Caco-2 (cell line): ENCODE measurements at regions of chr2 and their contacts with region 1.

Region 1: GRCh38 chr2:164841719-164842623 is at the start of gene COBLL1:
- DNase-seq: peak; percentile 94 to 95
- H3K4me3 ChIP-seq: peak within 1 kb of the TSS; percentile 86
- H3K4me3 Mint-ChIP-seq: peak within 1 kb of the TSS; percentile 95
- H3K27ac Mint-ChIP-seq: peak within 1 kb of the TSS; percentile 92
- H3K4me1 ChIP-seq: peaks cover 27% of the 10 kb centered on the region
- H3K4me1 Mint-ChIP-seq: peaks cover 14% of the 10 kb centered on the region
- H3K27me3 ChIP-seq: no peaks in the 10 kb centered on the region
- H3K27me3 Mint-ChIP-seq: no peaks in the 10 kb centered on the region
- CTCF ChIP-seq: peak; percentile 87 to 89
- total RNA-seq, gene COBLL1: 42.1 and 47.9 TPM in 2 replicates

Region 2: GRCh38 chr2:164710837-164711765 is 130.9 kb before region 1 on chr2:
- CTCF ChIA-PET with region 1: interaction called, 6 read pairs
- POLR2A ChIA-PET with region 1: no interaction called
- intact Hi-C with region 1: loop called (anchors 1 kb)
- DNase-seq: peak; percentile 46 to 56
- H3K4me3 ChIP-seq: 0 out of 2 replicates have a peak overlapping the region, but pooled peaks have one; percentile 3
- H3K4me3 Mint-ChIP-seq: peak overlapping the region; percentile 59
- H3K27ac Mint-ChIP-seq: peak overlapping the region; percentile 40
- H3K4me1 ChIP-seq: peaks cover 66% of the 10 kb centered on the region
- H3K4me1 Mint-ChIP-seq: peaks cover 41% of the 10 kb centered on the region
- H3K27me3 ChIP-seq: no peaks in the 10 kb centered on the region
- H3K27me3 Mint-ChIP-seq: no peaks in the 10 kb centered on the region
- CTCF ChIP-seq: no peak

Region 3: DNA sequence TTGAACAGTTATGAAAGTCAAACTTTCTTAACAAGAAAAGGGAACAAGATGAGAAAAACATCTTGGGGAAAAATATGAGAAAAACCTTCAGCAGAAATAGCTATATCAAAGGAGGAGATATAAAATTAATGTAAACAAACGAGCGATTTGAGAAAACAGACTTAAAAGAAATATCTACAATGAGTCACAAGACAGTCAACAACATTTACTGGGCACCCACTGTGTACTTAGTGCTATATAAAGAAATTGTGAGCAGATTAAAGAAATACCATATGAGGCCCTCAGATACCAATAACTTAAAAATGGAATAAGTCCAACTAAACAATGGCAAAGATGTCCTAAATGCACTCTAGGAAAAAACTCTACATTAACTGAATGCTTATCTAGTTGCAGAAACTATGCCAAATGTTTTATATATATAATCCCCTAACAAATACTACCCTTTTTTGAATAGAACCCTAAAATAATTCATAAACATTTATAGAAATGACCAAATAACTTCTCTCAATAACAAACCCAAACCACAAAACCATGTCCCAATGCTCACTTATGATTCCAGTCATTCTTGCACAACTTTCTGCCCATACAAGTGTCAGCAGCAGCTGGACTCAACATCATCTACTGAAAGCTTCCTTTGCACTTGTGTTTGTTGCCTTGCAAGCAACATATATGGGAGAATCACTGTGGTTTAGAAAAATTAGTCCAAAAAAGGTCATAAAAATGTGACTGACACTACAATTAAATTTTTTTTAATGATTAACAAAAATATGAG is 83.9 kb before region 1 on chr2:
- CTCF ChIA-PET with region 1: no interaction called
- POLR2A ChIA-PET with region 1: no interaction called
- intact Hi-C with region 1: loop called (anchors 5 kb)
- DNase-seq: no peak
- H3K4me3 ChIP-seq: no peak overlapping the region
- H3K4me3 Mint-ChIP-seq: no peak overlapping the region
- H3K27ac Mint-ChIP-seq: no peak overlapping the region
- H3K4me1 ChIP-seq: peaks cover 11% of the 10 kb centered on the region; the same call in 1 of the 2 replicates
- H3K4me1 Mint-ChIP-seq: peaks cover 19% of the 10 kb centered on the region
- H3K27me3 ChIP-seq: no peaks in the 10 kb centered on the region
- H3K27me3 Mint-ChIP-seq: no peaks in the 10 kb centered on the region
- CTCF ChIP-seq: no peak

Region 4: DNA sequence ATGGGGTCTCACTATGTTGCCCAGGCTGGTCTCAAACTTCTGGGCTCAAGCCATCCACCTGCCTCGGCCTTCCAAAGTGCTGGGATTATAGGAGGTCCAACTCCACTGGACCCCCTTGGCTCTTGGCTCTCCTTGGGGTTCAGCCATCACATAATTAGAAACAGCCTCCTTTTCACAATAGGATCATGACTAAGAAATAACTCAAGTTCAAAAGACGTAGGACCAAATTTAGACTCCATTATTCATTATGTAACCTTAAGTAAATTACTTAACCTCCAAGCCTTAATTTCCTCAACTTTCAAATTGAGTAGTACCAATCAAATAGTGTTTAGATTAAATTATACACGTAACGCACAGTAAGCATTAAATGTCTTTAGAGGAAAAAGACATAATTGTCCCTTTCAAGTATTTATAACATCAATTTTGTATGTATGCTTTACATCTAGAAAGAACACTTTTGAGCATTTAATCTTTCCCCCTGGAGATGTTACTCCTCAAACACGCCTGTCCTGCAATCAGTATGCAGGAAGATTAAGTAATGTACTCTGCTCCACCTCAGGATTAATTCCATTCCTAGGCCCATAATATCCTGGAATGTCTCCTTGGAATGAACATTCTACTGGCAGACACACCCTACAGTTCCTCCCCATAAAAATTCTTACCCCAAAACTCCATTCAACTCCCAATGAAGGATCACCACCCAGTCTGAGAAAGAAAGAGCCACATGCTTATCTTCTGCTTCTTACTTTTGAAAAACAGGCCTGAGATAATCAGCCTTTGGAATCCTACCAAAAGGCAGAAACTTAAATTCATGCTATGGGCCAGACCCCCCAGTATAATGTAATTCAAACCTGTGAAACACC is 49.4 kb before region 1 on chr2:
- CTCF ChIA-PET with region 1: no interaction called
- POLR2A ChIA-PET with region 1: no interaction called
- intact Hi-C with region 1: loop called (anchors 1 kb)
- DNase-seq: peak; percentile 38 to 40
- H3K4me3 ChIP-seq: no peak overlapping the region
- H3K4me3 Mint-ChIP-seq: peak overlapping the region; percentile 43
- H3K27ac Mint-ChIP-seq: peak overlapping the region; percentile 91
- H3K4me1 ChIP-seq: peaks cover 27% of the 10 kb centered on the region
- H3K4me1 Mint-ChIP-seq: peaks cover 31% of the 10 kb centered on the region
- H3K27me3 ChIP-seq: no peaks in the 10 kb centered on the region
- H3K27me3 Mint-ChIP-seq: no peaks in the 10 kb centered on the region
- CTCF ChIP-seq: no peak

Region 5: GRCh38 chr2:164898475-164898874 is 56.5 kb after region 1 on chr2:
- CTCF ChIA-PET with region 1: no interaction called
- POLR2A ChIA-PET with region 1: interaction called, 4 read pairs
- intact Hi-C with region 1: loop called (anchors 1 kb)
- DNase-seq: peak; percentile 80 to 83
- H3K4me3 ChIP-seq: no peak overlapping the region
- H3K4me3 Mint-ChIP-seq: peak overlapping the region; percentile 65
- H3K27ac Mint-ChIP-seq: peak overlapping the region; percentile 72
- H3K4me1 ChIP-seq: peaks cover 34% of the 10 kb centered on the region
- H3K4me1 Mint-ChIP-seq: peaks cover 26% of the 10 kb centered on the region
- H3K27me3 ChIP-seq: no peaks in the 10 kb centered on the region
- H3K27me3 Mint-ChIP-seq: no peaks in the 10 kb centered on the region
- CTCF ChIP-seq: no peak

Region 6: DNA sequence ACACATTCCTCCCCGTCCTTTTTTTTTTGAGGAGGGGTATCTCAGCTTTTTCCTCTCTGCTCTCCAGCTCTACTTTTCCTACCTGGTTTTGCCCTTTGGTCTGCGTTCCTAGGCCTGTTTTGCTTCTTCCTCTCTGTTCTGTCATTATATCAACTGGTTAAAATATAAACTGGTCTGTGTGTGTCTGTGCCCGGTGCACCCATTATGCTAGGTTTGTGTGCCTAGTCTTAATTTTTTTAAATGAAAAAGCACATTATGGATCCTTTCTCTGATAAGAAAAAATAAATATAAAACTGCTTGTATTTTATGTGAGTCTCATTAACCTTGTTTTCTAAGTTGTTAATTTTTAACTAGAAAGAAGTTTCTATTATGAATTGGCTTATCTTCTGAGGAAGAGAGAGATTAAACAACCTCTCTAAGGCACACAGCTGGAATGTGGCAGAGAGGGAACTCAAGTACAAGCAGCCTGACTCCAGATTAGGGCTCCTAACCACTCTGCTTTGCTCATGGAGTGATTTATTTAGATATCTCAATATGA is 96.0 kb after region 1 on chr2:
- CTCF ChIA-PET with region 1: no interaction called
- POLR2A ChIA-PET with region 1: interaction called, 3 read pairs
- intact Hi-C with region 1: loop called (anchors 1 kb)
- DNase-seq: peak; percentile 53 to 69
- H3K4me3 ChIP-seq: no peak overlapping the region; the same call in 1 of the 2 replicates
- H3K4me3 Mint-ChIP-seq: peak overlapping the region; percentile 61
- H3K27ac Mint-ChIP-seq: peak overlapping the region; percentile 67
- H3K4me1 ChIP-seq: peaks cover 40% of the 10 kb centered on the region
- H3K4me1 Mint-ChIP-seq: peaks cover 7% of the 10 kb centered on the region
- H3K27me3 ChIP-seq: no peaks in the 10 kb centered on the region
- H3K27me3 Mint-ChIP-seq: no peaks in the 10 kb centered on the region
- CTCF ChIP-seq: no peak